Left colon (tissue), 2 donors: ENCODE measurements at regions of chr9 and their contacts with region 1.

Region 1: GRCh38 chr9:98455256-98456155 is 200.1 kb upstream of the TBC1D2 start:
- DNase-seq: no peak
- ATAC-seq: no peak

Region 2: GRCh38 chr9:98365227-98365669 is 90.3 kb before region 1 on chr9:
- intact Hi-C with region 1: no loop called
- DNase-seq: no peak
- ATAC-seq: no peak

Region 3: GRCh38 chr9:98383758-98384157 is 71.7 kb before region 1 on chr9:
- intact Hi-C with region 1: no loop called
- DNase-seq: no peak
- ATAC-seq: no peak

Region 4: DNA sequence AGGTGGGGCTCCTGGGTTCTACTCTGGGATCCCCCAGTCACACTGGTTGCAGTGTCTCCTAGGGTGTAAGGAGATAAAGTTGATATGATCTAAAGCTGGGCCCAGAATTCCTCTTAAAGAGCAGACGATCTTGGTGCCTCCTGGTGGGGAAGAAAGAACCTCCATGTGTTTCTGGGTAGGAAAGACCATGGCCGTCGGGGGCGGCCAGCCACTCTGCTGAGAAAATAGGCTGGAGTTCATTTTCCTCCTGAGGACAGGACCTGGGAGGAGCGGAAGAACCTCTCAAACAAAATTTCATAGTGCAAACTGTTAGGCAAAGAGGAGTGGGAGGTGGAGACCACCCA is 36.3 kb before region 1 on chr9:
- intact Hi-C with region 1: loop called in 1 of 2 experiments (anchors 2 kb)
- DNase-seq: no peak
- ATAC-seq: no peak

Region 5: GRCh38 chr9:98504298-98505282 is 49.1 kb after region 1 on chr9:
- intact Hi-C with region 1: no loop called
- DNase-seq: no peak
- ATAC-seq: no peak